ENCODE measurements at regions of chr5 and their contacts with region 1.

Region 1: DNA sequence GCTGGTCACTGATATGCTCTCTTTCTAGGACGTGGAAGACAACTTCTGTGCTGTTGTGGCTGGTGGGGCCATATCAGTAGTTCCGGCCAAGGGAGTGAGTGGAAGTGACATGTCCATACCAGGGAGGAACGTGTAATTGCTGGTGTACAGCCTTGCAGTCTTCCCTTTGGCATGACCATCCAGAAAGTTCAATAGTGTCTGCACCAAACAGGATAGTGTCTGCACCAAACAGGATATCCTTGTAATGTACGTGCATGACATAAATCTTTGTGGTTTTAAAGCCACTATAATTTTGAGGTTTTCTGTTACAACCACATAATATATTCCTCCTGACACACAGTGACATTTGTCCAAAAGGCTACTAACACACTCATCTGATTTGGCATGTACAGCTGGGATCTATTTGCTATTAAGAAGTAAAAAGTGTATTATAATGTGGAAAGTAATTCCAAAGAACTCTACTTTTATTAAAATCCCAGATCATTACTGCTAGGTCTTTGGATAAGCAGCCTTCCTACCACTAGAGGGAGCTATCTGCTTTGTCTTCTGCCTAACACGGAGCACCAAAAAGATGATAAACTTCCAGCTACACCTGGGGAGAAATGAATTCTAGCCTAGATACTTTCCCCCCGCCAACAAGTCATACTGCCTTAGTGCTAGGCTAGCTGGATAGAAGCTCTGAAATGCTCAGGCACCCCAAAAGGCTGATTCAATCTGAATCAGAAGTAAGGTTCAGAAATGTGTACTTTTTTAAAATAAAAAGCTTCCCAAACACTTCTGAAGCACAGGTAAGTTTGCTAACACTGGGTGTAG is 52.7 kb downstream of the RNF145 start:
- DNase-seq: peak; percentile 21
- ATAC-seq: peak; percentile 79
- H3K4me3 Mint-ChIP-seq: no peak overlapping the region
- H3K27ac Mint-ChIP-seq: no peak overlapping the region
- H3K4me1 Mint-ChIP-seq: peaks cover 40% of the 10 kb centered on the region
- H3K27me3 Mint-ChIP-seq: no peaks in the 10 kb centered on the region

Region 2: DNA sequence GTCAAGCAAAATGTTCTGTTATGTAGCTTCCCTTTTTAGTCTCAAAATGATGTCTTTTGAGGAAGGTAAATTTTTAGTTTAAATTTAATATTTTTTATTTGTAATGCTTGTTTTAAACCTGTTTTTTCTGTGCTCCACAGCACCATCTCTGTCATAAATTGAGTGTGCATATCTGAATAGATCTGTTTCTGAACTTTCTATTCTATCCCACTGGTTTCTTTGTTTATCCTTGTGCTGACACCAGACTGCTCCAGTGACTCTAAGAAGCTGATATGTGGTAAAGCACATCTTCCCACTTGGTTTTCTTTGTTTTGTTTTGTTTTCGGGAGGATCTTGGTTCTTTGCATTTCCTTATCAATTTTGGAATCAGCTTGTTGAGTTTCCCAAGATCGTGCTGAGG is 59.8 kb after region 1 on chr5:
- CTCF ChIA-PET with region 1: interaction called, 15 read pairs
- POLR2A ChIA-PET with region 1: no interaction called
- intact Hi-C with region 1: no loop called
- DNase-seq: no peak
- ATAC-seq: peak; percentile 63
- H3K4me3 Mint-ChIP-seq: no peak overlapping the region
- H3K27ac Mint-ChIP-seq: no peak overlapping the region
- H3K4me1 Mint-ChIP-seq: peaks cover 28% of the 10 kb centered on the region
- H3K27me3 Mint-ChIP-seq: no peaks in the 10 kb centered on the region

Region 3: GRCh38 chr5:159274676-159275075 is 118.0 kb after region 1 on chr5:
- CTCF ChIA-PET with region 1: interaction called, 21 read pairs
- POLR2A ChIA-PET with region 1: no interaction called
- intact Hi-C with region 1: no loop called
- DNase-seq: no peak
- ATAC-seq: no peak
- H3K4me3 Mint-ChIP-seq: no peak overlapping the region
- H3K27ac Mint-ChIP-seq: no peak overlapping the region
- H3K4me1 Mint-ChIP-seq: peaks cover 20% of the 10 kb centered on the region
- H3K27me3 Mint-ChIP-seq: no peaks in the 10 kb centered on the region

Region 4: GRCh38 chr5:159294921-159295320 is 138.3 kb after region 1 on chr5:
- CTCF ChIA-PET with region 1: no interaction called
- POLR2A ChIA-PET with region 1: no interaction called
- intact Hi-C with region 1: no loop called
- DNase-seq: no peak
- ATAC-seq: no peak
- H3K4me3 Mint-ChIP-seq: no peak overlapping the region
- H3K27ac Mint-ChIP-seq: no peak overlapping the region
- H3K4me1 Mint-ChIP-seq: no peaks in the 10 kb centered on the region
- H3K27me3 Mint-ChIP-seq: no peaks in the 10 kb centered on the region

Region 5: DNA sequence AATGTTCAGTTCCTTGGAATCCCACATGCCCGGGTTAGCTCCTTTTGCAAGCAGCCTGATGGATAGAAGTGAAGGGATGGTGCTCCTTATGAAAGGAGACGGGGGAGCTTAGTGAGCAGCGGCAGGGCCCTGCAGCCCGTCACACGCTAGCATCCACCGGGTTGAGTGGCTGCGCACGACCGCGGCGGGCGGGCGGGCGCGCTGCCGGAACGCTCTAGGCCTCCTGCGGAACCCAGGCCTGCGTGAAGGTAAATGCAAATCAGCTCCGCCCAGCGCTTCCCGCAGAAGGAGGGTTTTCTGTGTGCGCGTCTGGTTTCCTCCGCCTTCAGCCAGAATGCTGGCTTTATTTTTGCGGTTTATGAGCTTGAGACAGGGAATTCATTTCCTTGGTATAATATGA is 153.9 kb after region 1 on chr5:
- CTCF ChIA-PET with region 1: interaction called, 19 read pairs
- POLR2A ChIA-PET with region 1: interaction called, 3 read pairs
- intact Hi-C with region 1: no loop called
- DNase-seq: peak; percentile 67
- ATAC-seq: peak; percentile 88
- H3K4me3 Mint-ChIP-seq: peak overlapping the region; percentile 13
- H3K27ac Mint-ChIP-seq: no peak overlapping the region
- H3K4me1 Mint-ChIP-seq: peaks cover 9% of the 10 kb centered on the region
- H3K27me3 Mint-ChIP-seq: peaks cover 4% of the 10 kb centered on the region

Region 6: DNA sequence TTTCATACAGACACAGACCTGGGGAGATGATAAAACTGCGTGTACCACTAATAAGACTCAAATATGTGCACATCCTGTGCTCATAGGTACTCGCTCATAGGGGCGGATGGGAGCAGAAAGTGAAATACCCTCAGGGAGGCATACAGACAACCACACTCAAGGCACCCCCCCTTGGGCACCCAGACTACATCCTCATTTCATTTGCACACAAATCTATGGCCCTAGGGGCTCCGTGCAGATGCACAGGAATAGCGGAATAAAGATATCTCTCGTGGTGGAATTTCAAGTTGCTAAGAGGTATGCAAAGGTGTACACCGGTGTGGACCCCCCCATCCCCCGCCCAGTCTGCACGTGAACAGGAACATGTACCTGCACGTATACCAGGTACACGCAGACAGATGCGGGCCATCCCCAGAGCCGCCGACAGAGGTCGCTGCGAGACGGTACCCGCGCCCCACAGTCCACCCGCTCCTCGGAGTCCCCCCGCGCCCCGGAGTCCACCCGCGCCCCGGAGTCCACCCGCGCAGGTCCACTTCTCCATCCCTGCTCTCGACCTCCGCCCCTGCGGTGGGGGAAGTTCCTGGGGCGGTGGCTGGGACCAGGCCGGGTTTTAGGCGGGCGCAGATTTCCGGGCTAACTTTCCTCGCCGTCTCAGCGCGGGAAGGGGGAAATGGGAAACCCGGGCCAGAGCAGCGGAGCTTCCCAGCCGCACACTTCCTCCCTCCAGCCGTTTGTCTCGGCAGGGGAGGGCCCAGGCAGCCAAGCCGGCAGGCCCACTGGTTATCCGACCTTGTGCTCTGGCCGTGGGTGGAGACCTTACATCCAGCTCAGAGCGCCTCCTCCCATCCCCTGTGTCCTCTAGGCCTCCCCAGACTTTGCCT is 174.7 kb after region 1 on chr5:
- CTCF ChIA-PET with region 1: interaction called, 3 read pairs
- POLR2A ChIA-PET with region 1: no interaction called
- intact Hi-C with region 1: loop called in 1 of 2 experiments (anchors 5 kb)
- DNase-seq: peak; percentile 86
- ATAC-seq: peak; percentile 96
- H3K4me3 Mint-ChIP-seq: peak overlapping the region; percentile 62
- H3K27ac Mint-ChIP-seq: peak overlapping the region; percentile 76
- H3K4me1 Mint-ChIP-seq: peaks cover 15% of the 10 kb centered on the region
- H3K27me3 Mint-ChIP-seq: peaks cover 2% of the 10 kb centered on the region

Region 7: DNA sequence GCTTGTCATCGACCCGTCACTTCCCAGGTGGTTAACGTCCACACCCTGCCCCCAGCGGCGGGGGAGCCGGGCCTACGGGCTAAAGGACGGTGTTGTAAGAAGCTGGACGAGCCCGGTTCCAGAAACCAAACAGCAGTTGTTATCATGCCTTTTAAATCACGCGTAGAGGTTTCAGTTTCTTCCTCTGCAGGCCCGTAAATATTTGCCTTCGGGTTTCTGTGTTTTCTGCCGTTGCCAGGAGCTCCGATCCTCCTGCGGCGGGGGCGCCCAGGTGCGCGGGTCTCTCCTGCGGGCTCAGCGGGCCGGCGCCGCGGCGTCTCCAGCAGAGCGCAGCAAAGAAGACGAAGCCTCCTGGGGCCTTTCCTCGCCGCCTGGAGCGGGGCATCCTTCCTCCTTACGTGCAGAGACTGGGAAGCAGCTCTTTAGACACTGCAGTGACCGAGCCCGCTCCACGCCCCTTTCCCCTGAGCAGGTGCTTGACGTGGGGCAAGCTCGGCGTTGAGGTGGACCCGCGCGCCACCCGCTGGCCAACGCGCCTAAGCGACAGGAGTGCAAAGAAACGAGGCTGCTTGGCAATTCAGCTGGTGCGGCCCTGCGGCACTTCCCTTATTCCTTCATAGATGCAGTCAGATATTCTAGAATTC is 830.5 kb after region 1 on chr5:
- CTCF ChIA-PET with region 1: no interaction called
- POLR2A ChIA-PET with region 1: no interaction called
- intact Hi-C with region 1: loop called (anchors 5 kb)
- DNase-seq: peak; percentile 85
- ATAC-seq: peak; percentile 97
- H3K4me3 Mint-ChIP-seq: peak overlapping the region; percentile 21
- H3K27ac Mint-ChIP-seq: no peak overlapping the region
- H3K4me1 Mint-ChIP-seq: peaks cover 2% of the 10 kb centered on the region
- H3K27me3 Mint-ChIP-seq: peaks cover 24% of the 10 kb centered on the region